ENCODE measurements at regions of chr5 and their contacts with region 1.

Region 1: DNA sequence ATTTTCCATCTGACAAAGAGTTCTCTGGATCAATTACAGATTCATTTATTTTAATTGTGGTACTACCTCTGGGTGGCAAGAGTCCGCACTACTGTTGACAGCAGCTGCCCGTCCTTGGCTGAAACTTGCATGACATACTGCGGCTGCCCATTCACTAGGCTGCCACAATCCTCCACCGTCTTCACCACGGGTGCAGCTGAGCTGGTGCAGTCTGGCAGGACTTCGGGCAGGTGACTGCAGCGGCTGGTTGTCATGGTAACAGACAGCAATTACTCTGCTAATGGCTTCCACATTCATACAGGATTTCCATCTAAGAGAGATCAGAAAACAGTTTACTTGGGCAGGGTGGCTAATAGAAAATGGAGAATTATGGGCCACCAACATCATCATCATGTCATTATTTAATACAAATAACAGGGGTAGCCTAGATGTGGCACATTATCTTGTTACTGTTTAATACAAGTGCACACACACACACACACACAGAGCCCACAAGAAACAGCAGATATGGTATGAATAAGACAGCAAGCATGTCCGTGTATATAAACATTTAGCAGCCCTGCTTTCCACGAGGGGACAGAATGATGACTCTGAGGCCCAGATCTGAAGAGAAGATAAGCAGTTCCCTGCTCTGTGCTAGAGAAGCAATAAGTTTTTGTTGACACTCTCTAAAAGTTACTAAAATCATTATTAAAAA is 112.3 kb downstream of the MARCHF3 start:
- DNase-seq: peak; percentile 87
- ATAC-seq: peak; percentile 92
- H3K4me3 ChIP-seq: no peak overlapping the region
- H3K27ac ChIP-seq: peak overlapping the region; percentile 67
- H3K4me1 ChIP-seq: peaks cover 26% of the 10 kb centered on the region
- H3K27me3 ChIP-seq: no peaks in the 10 kb centered on the region
- CTCF ChIP-seq: no peak

Region 2: GRCh38 chr5:126884269-126884819 is 33.7 kb before region 1 on chr5:
- CTCF ChIA-PET with region 1: no interaction called
- POLR2A ChIA-PET with region 1: no interaction called
- intact Hi-C with region 1: loop called (anchors 1 kb)
- DNase-seq: peak; percentile 94
- ATAC-seq: peak; percentile 91
- H3K4me3 ChIP-seq: no peak overlapping the region
- H3K27ac ChIP-seq: no peak overlapping the region
- H3K4me1 ChIP-seq: peaks cover 17% of the 10 kb centered on the region
- H3K27me3 ChIP-seq: no peaks in the 10 kb centered on the region
- CTCF ChIP-seq: no peak

Region 3: GRCh38 chr5:126961702-126962101 is 43.6 kb after region 1 on chr5:
- CTCF ChIA-PET with region 1: no interaction called
- POLR2A ChIA-PET with region 1: no interaction called
- intact Hi-C with region 1: loop called (anchors 1 kb)
- DNase-seq: peak; percentile 64
- ATAC-seq: peak; percentile 81
- H3K4me3 ChIP-seq: no peak overlapping the region
- H3K27ac ChIP-seq: no peak overlapping the region
- H3K4me1 ChIP-seq: peaks cover 19% of the 10 kb centered on the region
- H3K27me3 ChIP-seq: no peaks in the 10 kb centered on the region
- CTCF ChIP-seq: no peak

Region 4: GRCh38 chr5:127072861-127073846 is 155.1 kb after region 1 on chr5 and contains the start of gene C5orf63:
- CTCF ChIA-PET with region 1: no interaction called
- POLR2A ChIA-PET with region 1: no interaction called
- intact Hi-C with region 1: no loop called
- DNase-seq: peak; percentile 59
- ATAC-seq: peak; percentile 90
- H3K4me3 ChIP-seq: peak within 1 kb of the TSS; percentile 73
- H3K27ac ChIP-seq: no peak within 1 kb of the TSS
- H3K4me1 ChIP-seq: no peaks in the 10 kb centered on the region; the same call in 1 of the 2 replicates
- H3K27me3 ChIP-seq: no peaks in the 10 kb centered on the region
- CTCF ChIP-seq: no peak
- total RNA-seq, gene C5orf63: 2.9 and 3.7 TPM in 2 replicates

Measured in PC-3 (cell line).